ENCODE measurements at regions of chr13 and their contacts with region 1.

Region 1: GRCh38 chr13:45521297-45521696 is 56.6 kb downstream of the COG3 start:
- DNase-seq: peak; percentile 46
- H3K4me3 ChIP-seq: no peak overlapping the region
- H3K27ac ChIP-seq: no peak overlapping the region
- H3K4me1 ChIP-seq: peaks cover 23% of the 10 kb centered on the region
- H3K27me3 ChIP-seq: no peaks in the 10 kb centered on the region
- CTCF ChIP-seq: no peak

Region 2: DNA sequence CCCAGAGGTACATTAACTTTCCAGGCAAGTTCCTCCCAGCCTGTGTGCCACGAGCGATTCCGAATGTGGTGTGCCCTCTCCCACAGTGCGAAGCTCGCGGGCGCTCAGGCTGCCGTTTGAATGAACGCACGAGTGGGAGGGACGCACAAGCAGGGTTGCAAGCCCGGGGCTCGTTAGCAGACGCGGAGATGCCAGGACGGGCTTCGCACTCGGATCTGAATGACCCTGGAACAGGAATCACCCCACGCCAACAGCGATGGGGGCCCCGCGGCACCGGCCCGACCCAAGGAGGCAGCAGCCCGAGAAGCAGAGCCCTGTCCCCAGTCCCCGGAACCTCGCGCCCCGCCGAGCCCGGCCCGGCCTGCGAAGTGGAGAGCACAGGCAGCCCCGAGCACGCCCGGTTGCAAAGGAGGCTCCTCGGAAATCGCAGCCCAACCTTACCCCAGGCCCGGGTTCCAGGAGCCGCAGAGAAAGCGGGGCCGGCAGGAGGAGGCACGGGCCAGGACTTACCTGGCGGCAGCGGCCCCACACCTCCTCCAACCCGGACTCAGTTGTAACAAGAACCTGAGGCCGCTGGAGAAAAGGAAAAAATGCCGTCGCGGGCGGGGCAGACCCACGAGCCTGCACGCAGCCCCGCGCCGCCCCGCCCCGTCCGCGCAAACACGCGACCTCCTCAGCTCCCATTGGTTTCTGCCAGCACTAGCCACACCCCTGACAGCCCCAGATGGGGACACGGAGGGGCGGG is 103.3 kb before region 1 on chr13 and contains the start of gene SLC25A30:
- CTCF ChIA-PET with region 1: no interaction called
- dilution Hi-C with region 1: no loop called
- in situ Hi-C with region 1: no loop called
- intact Hi-C with region 1: no loop called
- DNase-seq: peak; percentile 87
- H3K4me3 ChIP-seq: peak within 1 kb of the TSS; percentile 69 to 86 (median 80)
- H3K27ac ChIP-seq: peak within 1 kb of the TSS; percentile 63
- H3K4me1 ChIP-seq: peaks cover 7% of the 10 kb centered on the region
- H3K27me3 ChIP-seq: no peaks in the 10 kb centered on the region
- CTCF ChIP-seq: peak in 1 of 2 donors; percentile 0
- total RNA-seq, gene SLC25A30: 21.5 to 31.1 TPM

Region 3: DNA sequence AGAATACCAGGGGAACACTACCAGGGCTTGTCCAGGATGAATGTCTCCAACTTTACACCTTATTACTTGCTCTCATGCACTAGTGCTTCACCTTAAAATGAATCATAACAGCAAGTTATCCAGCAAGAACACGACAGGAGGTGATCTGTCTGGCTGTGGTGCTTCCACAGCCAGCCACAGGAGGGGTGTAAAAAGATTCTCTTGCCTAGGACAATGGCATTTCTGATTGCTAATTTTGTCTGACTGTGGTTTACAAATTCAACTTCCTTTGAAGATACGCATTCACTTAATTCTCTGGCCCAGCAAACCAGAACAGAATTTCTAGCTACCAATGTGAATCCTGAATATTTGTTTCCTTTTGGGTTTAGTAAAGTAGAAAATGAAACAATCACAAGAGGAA is 79.7 kb before region 1 on chr13:
- CTCF ChIA-PET with region 1: no interaction called
- dilution Hi-C with region 1: no loop called
- in situ Hi-C with region 1: no loop called
- intact Hi-C with region 1: no loop called
- DNase-seq: peak; percentile 79
- H3K4me3 ChIP-seq: no peak overlapping the region
- H3K27ac ChIP-seq: no peak overlapping the region
- H3K4me1 ChIP-seq: peaks cover 8% of the 10 kb centered on the region
- H3K27me3 ChIP-seq: no peaks in the 10 kb centered on the region
- CTCF ChIP-seq: peak; percentile 45 to 60

Region 4: GRCh38 chr13:45500492-45501174 is 20.7 kb before region 1 on chr13:
- CTCF ChIA-PET with region 1: no interaction called
- dilution Hi-C with region 1: no loop called
- in situ Hi-C with region 1: no loop called
- intact Hi-C with region 1: loop called (anchors 1 kb)
- DNase-seq: peak; percentile 96
- H3K4me3 ChIP-seq: peak overlapping the region in 1 of 3 experiments; percentile 28
- H3K27ac ChIP-seq: peak overlapping the region; percentile 96
- H3K4me1 ChIP-seq: peaks cover 32% of the 10 kb centered on the region
- H3K27me3 ChIP-seq: no peaks in the 10 kb centered on the region
- CTCF ChIP-seq: no peak

Region 5: DNA sequence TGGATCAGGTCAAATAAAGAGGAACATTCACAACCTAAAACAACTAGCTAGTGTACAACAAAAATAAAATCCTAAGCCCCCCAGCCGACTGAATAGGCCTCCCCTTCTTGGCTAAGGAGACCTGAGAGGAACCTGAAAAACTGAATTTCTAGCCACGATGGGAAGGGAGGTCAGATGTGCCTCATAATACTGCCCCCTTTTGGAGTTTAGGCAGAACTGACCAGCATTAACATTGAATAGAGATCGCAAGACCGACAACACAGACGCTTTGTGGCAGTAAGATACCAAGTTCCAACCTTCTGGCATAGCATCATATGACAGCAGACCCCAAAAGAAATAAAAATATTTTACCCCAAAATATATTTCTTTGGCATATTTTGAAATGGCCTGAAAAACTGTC is 196.8 kb after region 1 on chr13:
- CTCF ChIA-PET with region 1: no interaction called
- dilution Hi-C with region 1: no loop called
- in situ Hi-C with region 1: no loop called
- intact Hi-C with region 1: loop called (anchors 5 kb)
- DNase-seq: peak; percentile 9
- H3K4me3 ChIP-seq: no peak overlapping the region
- H3K27ac ChIP-seq: no peak overlapping the region
- H3K4me1 ChIP-seq: no peaks in the 10 kb centered on the region
- H3K27me3 ChIP-seq: no peaks in the 10 kb centered on the region
- CTCF ChIP-seq: peak; percentile 69 to 79

Measured in mammary epithelial cell (primary cell).